Astrocyte of the cerebellum (primary cell): ENCODE measurements at regions of chr6 and their contacts with region 1.

Region 1: GRCh38 chr6:40054602-40055001 is 120.3 kb upstream of the MOCS1 start:
- DNase-seq: no peak
- H3K4me3 ChIP-seq: no peak overlapping the region
- CTCF ChIP-seq: no peak

Region 2: GRCh38 chr6:39965751-39966150 is 88.9 kb before region 1 on chr6:
- in situ Hi-C with region 1: no loop called
- DNase-seq: no peak
- H3K4me3 ChIP-seq: no peak overlapping the region
- CTCF ChIP-seq: no peak

Region 3: DNA sequence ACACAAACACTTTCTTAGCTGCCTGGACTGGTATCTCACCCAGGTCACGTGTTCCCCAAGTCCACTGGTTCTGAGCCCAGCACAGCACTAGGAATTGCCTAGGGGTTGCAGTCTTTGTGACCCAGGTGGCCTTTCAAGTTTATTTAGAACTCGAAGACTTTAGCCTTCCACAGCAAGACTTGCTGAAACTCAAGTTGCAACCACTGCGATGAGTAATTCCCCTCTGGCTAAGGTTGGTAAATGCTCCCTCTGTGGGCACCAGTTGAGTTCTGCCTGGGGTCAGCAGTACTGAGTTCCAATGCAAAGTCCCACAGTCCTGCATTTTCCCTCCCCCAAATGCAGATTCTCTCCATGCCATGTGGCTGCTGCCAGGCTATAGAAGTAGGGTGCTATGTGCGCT is 42.8 kb before region 1 on chr6:
- in situ Hi-C with region 1: loop called (anchors 5 kb)
- DNase-seq: no peak
- H3K4me3 ChIP-seq: no peak overlapping the region
- CTCF ChIP-seq: no peak